Posterior vena cava (tissue), 2 donors: ENCODE measurements at regions of chr5 and their contacts with region 1.

Region 1: DNA sequence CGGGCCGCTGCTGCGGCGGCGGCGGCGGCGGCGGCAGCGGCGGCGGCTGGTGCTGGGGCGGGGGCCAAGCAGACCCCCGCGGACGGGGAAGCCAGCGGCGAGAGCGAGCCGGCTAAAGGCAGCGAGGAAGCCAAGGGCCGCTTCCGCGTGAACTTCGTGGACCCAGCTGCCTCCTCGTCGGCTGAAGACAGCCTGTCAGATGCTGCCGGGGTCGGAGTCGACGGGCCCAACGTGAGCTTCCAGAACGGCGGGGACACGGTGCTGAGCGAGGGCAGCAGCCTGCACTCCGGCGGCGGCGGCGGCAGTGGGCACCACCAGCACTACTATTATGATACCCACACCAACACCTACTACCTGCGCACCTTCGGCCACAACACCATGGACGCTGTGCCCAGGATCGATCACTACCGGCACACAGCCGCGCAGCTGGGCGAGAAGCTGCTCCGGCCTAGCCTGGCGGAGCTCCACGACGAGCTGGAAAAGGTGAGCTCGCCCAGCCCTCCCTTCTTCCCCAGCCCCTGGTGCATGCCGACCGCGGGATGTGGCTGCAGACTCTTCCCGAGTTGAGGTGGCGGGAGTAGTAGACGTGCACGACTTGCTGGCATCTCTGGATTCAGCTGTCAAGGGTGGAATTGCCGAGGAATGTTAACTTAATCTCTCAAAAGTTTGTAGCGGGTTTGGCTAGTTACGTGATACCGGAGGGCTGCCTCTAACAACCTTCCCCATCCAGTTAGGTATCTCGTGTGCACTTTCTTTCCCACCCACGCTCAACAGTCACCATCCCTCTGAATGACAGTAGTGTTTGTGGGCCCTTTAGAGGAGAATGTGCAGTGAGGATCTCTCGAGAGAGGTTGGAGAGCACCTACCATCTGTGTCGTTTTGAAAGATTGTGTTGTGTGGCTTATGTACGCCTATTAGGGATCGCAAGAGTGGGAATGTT is 932 bp downstream of the SLC12A2 start:
- DNase-seq: peak; percentile 84

Region 2: DNA sequence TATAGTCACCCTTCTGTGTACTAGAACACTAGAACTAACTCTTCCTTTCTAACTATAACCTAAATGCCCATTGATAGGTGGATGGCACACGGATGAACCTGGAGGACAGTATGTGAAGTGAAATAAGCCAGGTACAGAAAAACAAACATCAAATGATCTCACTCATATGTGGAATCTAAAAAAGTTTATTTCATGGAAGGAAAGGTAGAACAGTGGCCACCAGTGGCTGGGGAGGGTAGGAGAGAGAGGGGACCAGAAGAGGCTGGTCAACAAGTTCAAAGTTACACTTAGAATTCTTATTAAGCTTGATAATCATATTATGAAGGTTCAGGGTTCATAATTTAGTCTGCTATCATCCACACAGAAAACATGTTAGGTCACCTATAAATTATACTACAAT is 108.6 kb before region 1 on chr5:
- intact Hi-C with region 1: no loop called
- DNase-seq: no peak

Region 3: GRCh38 chr5:128774605-128775004 is 690.1 kb after region 1 on chr5:
- intact Hi-C with region 1: loop called in 1 of 2 experiments (anchors 5 kb)
- DNase-seq: no peak